Activated CD8-positive, alpha-beta memory T cell treated with anti-CD3 and anti-CD28 coated beads, Interleukin-2, amount 10 ng/mL, durations not matched to agents 7 days and 5 days (primary cell): ENCODE measurements at regions of chr1 and their contacts with region 1.

Region 1: DNA sequence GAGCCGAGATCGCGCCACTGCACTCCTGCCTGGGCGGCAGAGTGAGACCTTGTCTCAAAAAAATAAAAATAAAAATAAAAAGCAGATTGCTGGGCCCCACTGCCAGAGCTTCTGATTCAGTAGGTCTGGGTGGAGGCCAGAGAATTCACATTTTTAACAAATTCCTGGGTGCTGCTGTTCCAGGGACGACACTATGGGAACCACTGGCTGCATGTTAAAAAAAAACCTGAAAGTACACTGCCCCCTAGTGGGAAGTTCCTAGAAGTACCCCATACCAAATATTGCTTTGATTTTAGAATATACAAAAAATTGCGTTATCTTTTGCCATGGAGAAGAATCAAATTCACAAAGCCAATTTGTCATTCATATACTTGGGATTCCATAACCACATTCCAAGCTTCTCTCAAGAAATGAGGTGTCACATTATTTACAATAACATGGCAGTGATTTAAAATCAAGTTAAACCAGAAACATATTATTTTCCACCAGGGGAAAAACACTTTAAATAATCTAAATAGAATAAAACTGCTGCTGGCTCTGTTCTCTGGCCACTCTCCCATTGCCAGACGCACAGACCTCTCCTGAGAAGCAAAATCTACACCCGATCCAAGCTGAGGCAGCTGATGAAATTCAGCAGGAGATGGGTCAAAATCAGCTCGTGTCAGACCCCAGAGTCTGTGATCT is 27.4 kb downstream of the SYF2 start:
- DNase-seq: no peak
- ATAC-seq: no peak
- H3K4me3 Mint-ChIP-seq: no peak overlapping the region
- H3K27ac Mint-ChIP-seq: no peak overlapping the region
- H3K4me1 Mint-ChIP-seq: no peaks in the 10 kb centered on the region
- H3K27me3 Mint-ChIP-seq: peaks cover 45% of the 10 kb centered on the region

Region 2: DNA sequence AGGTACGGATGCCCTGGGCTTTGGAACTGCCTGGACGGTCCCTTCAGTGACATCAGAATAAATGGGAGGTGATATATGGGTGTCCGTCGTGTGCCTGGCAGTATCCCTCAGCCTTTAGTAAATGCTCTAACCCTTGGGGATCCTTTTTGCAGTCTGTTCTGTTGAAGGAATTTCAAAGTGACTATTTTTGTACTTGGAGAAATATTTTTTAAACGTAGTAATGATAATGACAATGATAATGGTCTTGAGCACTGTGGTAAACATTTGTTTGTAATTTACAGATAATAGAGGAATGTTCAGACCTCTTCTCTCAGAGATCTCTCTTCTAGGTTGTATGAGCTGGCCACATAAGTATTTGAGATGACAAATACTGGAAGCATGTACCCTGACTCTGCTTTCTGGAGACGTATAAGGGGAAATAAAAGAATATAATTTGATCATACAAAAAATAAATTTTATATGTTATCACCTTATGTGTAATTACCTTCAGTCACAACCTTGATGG is 603.9 kb before region 1 on chr1:
- CTCF ChIA-PET with region 1: no interaction called
- DNase-seq: no peak
- ATAC-seq: no peak
- H3K4me3 Mint-ChIP-seq: no peak overlapping the region
- H3K27ac Mint-ChIP-seq: no peak overlapping the region
- H3K4me1 Mint-ChIP-seq: peaks cover 2% of the 10 kb centered on the region
- H3K27me3 Mint-ChIP-seq: no peaks in the 10 kb centered on the region

Region 3: GRCh38 chr1:25157846-25158245 is 47.1 kb before region 1 on chr1:
- CTCF ChIA-PET with region 1: no interaction called
- DNase-seq: no peak
- ATAC-seq: no peak
- H3K4me3 Mint-ChIP-seq: no peak overlapping the region
- H3K27ac Mint-ChIP-seq: no peak overlapping the region
- H3K4me1 Mint-ChIP-seq: no peaks in the 10 kb centered on the region
- H3K27me3 Mint-ChIP-seq: peaks cover 74% of the 10 kb centered on the region

Region 4: GRCh38 chr1:25216123-25216522 is 11.2 kb after region 1 on chr1:
- CTCF ChIA-PET with region 1: interaction called, 17 read pairs
- DNase-seq: no peak
- ATAC-seq: no peak
- H3K4me3 Mint-ChIP-seq: no peak overlapping the region
- H3K27ac Mint-ChIP-seq: no peak overlapping the region
- H3K4me1 Mint-ChIP-seq: no peaks in the 10 kb centered on the region
- H3K27me3 Mint-ChIP-seq: peaks cover 11% of the 10 kb centered on the region

Region 5: GRCh38 chr1:25232027-25232865 is 27.3 kb after region 1 on chr1 and contains the start of gene SYF2:
- CTCF ChIA-PET with region 1: interaction called, 13 read pairs
- DNase-seq: peak; percentile 95
- ATAC-seq: peak; percentile 92
- H3K4me3 Mint-ChIP-seq: no peak within 1 kb of the TSS
- H3K27ac Mint-ChIP-seq: no peak within 1 kb of the TSS
- H3K4me1 Mint-ChIP-seq: peaks cover 35% of the 10 kb centered on the region
- H3K27me3 Mint-ChIP-seq: no peaks in the 10 kb centered on the region
- total RNA-seq, gene SYF2: 33.0 to 33.8 TPM